Dendritic cell treated with granulocyte-macrophage colony-stimulating factor and Interleukin-4, amounts not matched to agents 40 ng/mL and 50 ng/mL, for 4 days (primary cell): ENCODE measurements at regions of chr3 and their contacts with region 1.

Region 1: GRCh38 chr3:136682740-136683312 is 69.4 kb downstream of the STAG1 start:
- H3K4me3 Mint-ChIP-seq: no peak overlapping the region
- H3K27ac Mint-ChIP-seq: no peak overlapping the region
- H3K4me1 Mint-ChIP-seq: peaks cover 5% of the 10 kb centered on the region
- H3K27me3 Mint-ChIP-seq: no peaks in the 10 kb centered on the region

Region 2: GRCh38 chr3:136217196-136217595 is 465.6 kb before region 1 on chr3:
- intact Hi-C with region 1: no loop called
- H3K4me3 Mint-ChIP-seq: no peak overlapping the region
- H3K27ac Mint-ChIP-seq: no peak overlapping the region
- H3K4me1 Mint-ChIP-seq: no peaks in the 10 kb centered on the region
- H3K27me3 Mint-ChIP-seq: no peaks in the 10 kb centered on the region

Region 3: DNA sequence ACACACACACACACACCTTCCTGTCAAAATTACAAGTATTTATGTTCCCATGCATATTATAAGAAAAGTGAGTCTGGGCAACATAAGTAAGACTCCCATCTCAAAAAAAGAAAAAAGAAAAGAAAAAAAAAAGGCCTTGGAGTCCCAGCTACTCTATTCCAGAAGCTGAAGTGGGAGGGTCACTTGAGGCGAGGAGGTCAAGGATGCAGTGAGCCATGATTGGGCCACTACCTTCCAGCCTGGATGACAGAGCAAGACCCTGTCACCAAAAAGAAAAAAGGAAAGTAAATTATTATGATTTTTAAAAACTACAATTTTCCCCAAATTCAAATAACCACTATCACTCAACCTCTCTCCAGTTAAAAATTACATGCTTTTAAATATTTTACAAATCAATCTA is 43.8 kb before region 1 on chr3:
- intact Hi-C with region 1: no loop called
- H3K4me3 Mint-ChIP-seq: no peak overlapping the region
- H3K27ac Mint-ChIP-seq: no peak overlapping the region
- H3K4me1 Mint-ChIP-seq: peaks cover 12% of the 10 kb centered on the region
- H3K27me3 Mint-ChIP-seq: no peaks in the 10 kb centered on the region

Region 4: DNA sequence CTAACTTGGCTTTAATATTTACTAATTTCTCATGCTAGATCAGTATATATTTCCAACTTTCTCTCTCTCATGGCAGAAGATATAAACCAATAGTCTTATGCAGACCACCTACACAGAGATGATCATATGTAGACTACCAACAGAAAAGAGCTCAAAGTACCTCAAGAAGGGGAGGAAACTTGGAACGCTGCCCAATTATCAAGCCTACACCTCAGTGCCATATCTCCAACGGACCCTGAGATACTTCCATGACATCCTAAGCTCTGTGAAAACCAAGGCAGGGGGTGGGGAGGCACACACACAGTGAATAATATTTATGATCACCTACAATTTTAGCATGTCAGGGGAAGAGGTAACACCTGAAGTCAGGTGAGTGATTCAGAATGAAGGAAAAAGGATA is 31.2 kb before region 1 on chr3:
- intact Hi-C with region 1: no loop called
- H3K4me3 Mint-ChIP-seq: no peak overlapping the region
- H3K27ac Mint-ChIP-seq: no peak overlapping the region
- H3K4me1 Mint-ChIP-seq: peaks cover 21% of the 10 kb centered on the region
- H3K27me3 Mint-ChIP-seq: no peaks in the 10 kb centered on the region

Region 5: DNA sequence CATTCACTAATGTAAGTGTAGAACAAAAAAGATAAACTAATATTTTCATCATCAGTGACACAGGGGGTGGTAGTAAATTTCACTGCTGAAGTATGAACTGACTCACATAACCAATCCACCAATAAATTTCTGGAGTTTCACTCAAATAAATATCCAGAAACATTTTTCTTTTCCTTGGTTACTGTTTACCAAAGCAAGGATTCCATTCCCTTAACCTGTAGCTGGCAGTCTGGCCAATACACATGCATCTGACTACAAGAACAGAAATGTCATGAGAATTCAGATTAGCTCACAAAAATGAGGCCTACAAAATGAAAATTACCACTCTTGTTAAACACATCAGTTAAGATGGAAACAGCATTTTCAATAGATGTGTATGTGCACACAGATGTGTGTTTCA is 10.9 kb before region 1 on chr3:
- intact Hi-C with region 1: loop called (anchors 1 kb)
- H3K4me3 Mint-ChIP-seq: no peak overlapping the region
- H3K27ac Mint-ChIP-seq: no peak overlapping the region
- H3K4me1 Mint-ChIP-seq: peaks cover 26% of the 10 kb centered on the region
- H3K27me3 Mint-ChIP-seq: no peaks in the 10 kb centered on the region